ENCODE measurements at regions of chr3 and their contacts with region 1.

Region 1: GRCh38 chr3:195863121-195864006 is 45.0 kb downstream of the TNK2 start:
- DNase-seq: peak; percentile 69
- H3K4me3 ChIP-seq: no peak overlapping the region
- H3K27ac ChIP-seq: no peak overlapping the region
- H3K4me1 ChIP-seq: no peaks in the 10 kb centered on the region
- CTCF ChIP-seq: peak; percentile 85

Region 2: DNA sequence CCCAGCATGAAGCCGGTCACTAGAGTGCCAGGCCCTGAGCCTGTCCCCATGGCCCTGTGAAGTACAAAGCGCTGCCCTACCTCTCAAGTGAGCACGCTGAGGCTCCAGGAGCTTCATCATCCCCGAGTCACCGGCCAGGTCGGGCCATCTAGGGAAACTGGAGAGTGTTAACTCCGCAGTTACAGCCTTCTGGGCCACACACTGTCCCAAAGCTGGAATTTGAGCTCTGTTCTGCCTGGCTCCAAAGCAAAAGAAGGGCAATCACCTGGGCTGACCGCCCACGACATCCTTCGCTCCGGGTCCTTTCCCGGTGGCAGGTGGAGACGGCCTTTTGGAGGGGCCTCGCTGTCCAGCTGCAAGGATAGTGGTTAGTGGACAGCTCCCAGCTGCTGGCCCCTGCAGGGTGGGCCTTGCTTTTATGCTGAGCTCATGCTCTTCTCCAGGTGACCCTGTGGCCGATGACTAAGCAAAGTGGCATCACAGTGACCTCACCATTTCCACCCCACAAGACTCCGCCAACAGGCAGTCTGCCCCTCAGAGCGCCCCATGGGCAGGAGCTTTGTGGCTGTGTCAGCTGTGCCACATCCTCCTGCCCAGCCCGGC is 48.1 kb before region 1 on chr3:
- CTCF ChIA-PET with region 1: no interaction called
- POLR2A ChIA-PET with region 1: no interaction called
- intact Hi-C with region 1: no loop called
- DNase-seq: no peak
- H3K4me3 ChIP-seq: no peak overlapping the region
- H3K27ac ChIP-seq: no peak overlapping the region
- H3K4me1 ChIP-seq: no peaks in the 10 kb centered on the region
- CTCF ChIP-seq: no peak

Region 3: DNA sequence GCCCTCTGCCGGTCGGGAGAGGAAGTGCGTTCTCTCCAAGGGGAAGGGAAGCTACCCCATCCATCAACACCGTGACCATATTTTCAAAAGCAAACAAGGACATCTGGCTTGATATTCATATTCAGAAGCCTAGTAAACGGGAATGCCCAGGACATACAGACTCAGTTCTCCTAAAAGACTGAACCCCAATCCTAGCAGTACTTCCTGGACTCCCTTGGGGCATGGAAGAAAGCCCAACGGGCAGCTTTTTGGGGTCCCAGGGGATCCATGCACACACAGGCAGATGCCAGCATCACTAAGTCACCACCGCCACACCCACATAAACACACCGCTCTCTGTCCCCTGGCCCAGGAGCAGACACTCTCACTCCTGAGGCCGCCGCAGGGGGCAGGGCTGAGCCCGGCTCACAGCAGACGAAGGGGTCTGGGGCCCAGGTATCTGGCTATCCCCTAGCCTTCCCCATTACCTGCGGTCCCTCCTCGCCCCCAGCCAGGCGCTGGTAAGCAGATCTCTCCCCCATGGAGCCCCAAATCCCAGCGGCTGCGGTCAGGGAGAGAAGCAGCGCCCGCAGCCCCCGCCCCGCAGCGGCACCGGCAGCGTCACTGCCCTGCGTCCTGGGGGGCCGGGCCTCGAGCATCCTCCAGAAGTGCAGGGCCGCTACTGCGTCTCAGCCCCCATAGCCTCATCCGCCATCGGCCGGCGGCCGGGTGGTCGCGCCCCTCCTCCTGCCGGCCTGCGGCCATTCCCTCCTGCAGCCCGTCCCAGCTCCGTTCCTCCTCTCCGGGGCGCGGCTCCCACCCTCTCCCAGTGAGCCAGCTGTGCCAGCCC is 31.6 kb after region 1 on chr3:
- CTCF ChIA-PET with region 1: interaction called, 5 read pairs
- POLR2A ChIA-PET with region 1: interaction called, 4 read pairs
- intact Hi-C with region 1: loop called (anchors 1 kb)
- DNase-seq: peak; percentile 82
- H3K4me3 ChIP-seq: peak overlapping the region; percentile 88
- H3K27ac ChIP-seq: peak overlapping the region; percentile 68
- H3K4me1 ChIP-seq: peaks cover 44% of the 10 kb centered on the region
- CTCF ChIP-seq: peak; percentile 89

Measured in OCI-LY7 (cell line).